Sigmoid colon (tissue), 7 donors: ENCODE measurements at regions of chr10 and their contacts with region 1.

Region 1: GRCh38 chr10:48306265-48306869 is at the start of gene MAPK8:
- DNase-seq: peak; percentile 95
- H3K4me3 ChIP-seq: peak within 1 kb of the TSS; percentile 86 to 98 (median 96)
- H3K27ac ChIP-seq: peak within 1 kb of the TSS; percentile 97 to 98 (median 98)
- H3K4me1 ChIP-seq: peaks cover 0 to 44% (median 24%) of the 10 kb centered on the region in 4 donors
- H3K27me3 ChIP-seq: no peaks in the 10 kb centered on the region
- CTCF ChIP-seq: no peak
- EP300 ChIP-seq: no peak
- POLR2A ChIP-seq: peak in 1 of 2 donors; percentile 55
- total RNA-seq, gene MAPK8: 46.7 to 74.5 (median 60.6) TPM

Region 2: DNA sequence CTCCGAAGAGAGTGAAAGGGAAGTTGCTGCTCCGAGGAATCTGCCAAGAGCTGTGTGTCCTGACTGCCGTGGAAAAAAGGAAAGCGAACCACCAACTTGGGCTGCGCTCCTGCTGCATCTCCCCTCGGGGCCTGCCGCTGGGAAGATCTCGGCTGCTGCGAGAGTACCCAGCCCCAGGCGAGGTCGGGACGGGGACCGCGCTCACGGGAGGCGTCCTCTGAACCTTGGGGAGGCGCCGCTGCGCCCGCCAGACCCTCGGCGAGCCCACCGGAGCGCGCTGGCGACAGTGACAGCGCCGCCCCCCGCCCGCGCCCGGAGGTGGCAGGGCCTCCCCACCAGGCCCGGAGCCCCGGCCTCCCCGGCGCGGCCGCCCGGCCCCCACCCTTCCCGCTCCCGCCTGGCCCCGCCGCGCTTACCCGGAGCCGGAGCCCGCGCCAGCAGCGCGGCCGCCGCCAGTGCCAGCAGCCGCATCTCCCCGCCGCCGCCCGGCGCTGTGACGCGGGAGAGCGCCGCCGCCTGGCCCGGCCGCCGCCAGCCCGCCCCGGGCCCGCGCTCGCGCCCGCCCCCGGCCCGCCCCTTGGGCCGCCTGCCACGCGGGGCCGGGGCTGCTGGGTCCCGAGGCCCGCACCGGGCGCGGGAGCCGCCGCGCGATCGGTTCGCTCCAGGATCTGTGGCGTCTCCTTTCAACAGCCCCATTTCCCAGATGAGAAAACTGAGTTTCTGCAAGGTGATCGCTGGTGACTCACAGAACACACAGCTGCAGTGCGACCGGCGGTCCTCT is 808.8 kb after region 1 on chr10 and contains the start of gene VSTM4:
- intact Hi-C with region 1: loop called (anchors 10 kb)
- DNase-seq: peak; percentile 80
- H3K4me3 ChIP-seq: peak within 1 kb of the TSS; percentile 54 to 77 (median 68)
- H3K27ac ChIP-seq: peak within 1 kb of the TSS; percentile 80 to 89 (median 86)
- H3K4me1 ChIP-seq: peaks cover 0 to 43% (median 19%) of the 10 kb centered on the region in 4 donors
- H3K27me3 ChIP-seq: no peaks in the 10 kb centered on the region
- CTCF ChIP-seq: no peak
- EP300 ChIP-seq: no peak
- POLR2A ChIP-seq: no peak
- total RNA-seq, gene VSTM4: 9.5 to 13.3 (median 10.9) TPM

Region 3: DNA sequence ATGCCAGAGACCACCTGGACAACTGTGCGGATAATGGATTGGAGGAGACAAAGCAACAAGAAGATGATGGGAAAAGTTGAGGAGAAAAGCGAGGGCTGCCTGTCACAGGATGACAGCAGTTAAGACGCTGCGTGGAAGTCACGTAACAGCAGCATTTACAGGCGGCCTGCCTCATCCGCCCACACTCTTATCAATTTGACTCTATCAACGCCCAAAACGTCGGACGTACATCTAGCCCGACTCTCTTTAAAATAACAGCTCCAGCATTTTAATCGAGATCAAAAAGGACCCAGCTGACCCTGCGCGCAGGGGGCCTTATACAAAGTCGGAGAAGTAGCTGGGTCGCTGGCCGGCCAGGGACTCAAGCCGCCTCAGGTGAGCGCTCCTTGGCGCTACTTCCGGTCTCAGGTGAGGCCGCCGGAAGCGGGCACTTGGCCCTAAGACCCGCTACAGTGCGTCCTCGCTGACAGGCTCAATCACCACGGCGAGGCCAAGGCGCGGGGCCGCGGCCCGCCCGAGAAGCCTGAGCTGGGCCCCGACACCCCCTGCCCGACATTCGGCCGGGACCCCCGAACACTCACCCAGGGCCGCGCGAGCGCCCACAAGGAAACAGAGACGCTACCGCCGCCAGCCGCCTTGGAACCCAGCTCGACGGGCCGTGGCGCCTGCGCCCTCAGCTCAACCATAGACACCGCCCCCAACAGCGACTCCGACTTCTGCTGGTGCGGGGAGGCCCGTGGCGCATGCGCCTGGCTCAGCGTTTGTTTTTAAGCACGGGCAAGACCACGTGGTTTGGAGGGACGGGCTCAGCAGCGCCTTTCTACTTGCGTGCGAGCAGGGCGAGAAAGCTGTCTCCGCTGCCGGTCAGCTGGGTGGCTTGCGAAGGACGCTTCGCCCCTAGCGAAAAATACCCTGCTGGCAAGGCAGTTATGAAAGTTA is 1232.3 kb after region 1 on chr10 and contains the start of gene ERCC6:
- intact Hi-C with region 1: loop called (anchors 10 kb)
- DNase-seq: peak; percentile 99
- H3K4me3 ChIP-seq: peak within 1 kb of the TSS; percentile 67 to 94 (median 84)
- H3K27ac ChIP-seq: peak within 1 kb of the TSS; percentile 83 to 89 (median 86)
- H3K4me1 ChIP-seq: peaks cover 0 to 18% (median 12%) of the 10 kb centered on the region in 4 donors
- H3K27me3 ChIP-seq: no peaks in the 10 kb centered on the region
- CTCF ChIP-seq: no peak
- EP300 ChIP-seq: no peak
- POLR2A ChIP-seq: peak in 1 of 2 donors; percentile 21
- total RNA-seq, gene ERCC6: 10.9 to 16.6 (median 11.7) TPM